Posterior cingulate gyrus (tissue), 11 donors: ENCODE measurements at regions of chr3 and their contacts with region 1.

Region 1: DNA sequence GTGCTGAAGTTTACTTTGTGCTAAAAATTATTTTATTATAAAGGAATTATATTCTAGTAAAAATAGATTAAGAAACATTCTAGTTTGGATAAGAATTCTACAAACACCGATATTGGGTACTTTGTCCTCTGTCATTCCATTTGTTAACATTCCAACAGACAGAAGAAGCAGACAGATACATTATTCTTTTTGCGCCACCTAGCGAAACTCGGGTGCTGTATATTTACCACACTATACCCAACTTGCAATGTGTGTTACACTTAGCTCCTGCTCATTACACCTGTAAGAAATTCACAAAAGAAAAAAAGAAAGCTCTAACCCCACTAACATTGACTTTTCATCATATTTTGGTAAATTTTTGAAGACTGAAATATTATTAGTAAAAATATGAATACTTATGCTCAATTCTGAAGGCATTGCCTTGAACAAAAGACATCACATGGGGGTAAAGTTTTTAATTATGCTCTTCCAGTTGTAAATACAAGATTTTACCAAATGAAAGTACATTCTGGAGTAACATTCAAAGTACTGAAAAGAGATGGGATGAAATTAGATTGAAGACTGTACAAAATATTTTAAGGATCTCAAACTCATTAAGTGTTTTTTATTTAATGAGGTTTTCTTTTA is 136.5 kb upstream of the MLF1 start:
- DNase-seq: peak in 6 of 10 donors; percentile 19 to 82 (median 46)

Region 2: DNA sequence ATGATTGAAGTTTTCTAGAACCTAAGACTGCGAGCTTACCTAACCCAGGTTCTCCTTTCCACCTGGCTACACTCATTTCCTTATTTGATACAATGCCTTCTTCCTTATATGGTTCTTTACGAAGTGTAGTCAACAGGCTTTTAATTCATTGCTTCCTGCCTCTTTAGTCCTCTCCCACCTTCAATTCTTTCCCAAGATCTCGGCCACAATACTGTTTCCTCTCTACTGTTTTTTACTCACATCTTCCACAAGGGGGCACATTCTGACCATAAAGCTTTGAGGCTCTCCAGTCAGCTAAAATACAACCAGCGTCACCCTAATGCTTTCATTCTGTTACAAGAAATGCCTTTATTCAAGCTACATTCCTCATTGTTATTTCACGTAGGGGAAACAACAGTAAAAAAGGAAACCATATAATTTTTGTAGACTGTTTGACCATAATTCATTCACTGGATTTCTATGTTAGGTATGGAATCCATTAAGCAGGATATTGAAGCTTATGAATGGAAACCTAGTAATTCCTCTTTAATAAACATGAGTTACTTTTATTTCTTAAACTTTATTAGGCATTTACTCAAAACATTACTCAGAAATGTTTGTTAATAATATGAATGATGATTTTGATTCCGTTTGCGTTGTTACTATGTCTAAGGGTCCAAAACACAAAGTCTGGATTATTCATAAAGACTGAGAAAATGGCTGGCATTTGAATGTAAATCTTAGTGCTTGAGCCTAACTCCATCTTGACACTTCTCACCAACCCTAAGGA is 901.8 kb before region 1 on chr3:
- intact Hi-C with region 1: loop called (anchors 10 kb)
- DNase-seq: peak in 1 of 10 donors; percentile 11

Region 3: GRCh38 chr3:157618075-157618760 is 816.3 kb before region 1 on chr3:
- intact Hi-C with region 1: loop called (anchors 1 kb)
- DNase-seq: no peak

Region 4: DNA sequence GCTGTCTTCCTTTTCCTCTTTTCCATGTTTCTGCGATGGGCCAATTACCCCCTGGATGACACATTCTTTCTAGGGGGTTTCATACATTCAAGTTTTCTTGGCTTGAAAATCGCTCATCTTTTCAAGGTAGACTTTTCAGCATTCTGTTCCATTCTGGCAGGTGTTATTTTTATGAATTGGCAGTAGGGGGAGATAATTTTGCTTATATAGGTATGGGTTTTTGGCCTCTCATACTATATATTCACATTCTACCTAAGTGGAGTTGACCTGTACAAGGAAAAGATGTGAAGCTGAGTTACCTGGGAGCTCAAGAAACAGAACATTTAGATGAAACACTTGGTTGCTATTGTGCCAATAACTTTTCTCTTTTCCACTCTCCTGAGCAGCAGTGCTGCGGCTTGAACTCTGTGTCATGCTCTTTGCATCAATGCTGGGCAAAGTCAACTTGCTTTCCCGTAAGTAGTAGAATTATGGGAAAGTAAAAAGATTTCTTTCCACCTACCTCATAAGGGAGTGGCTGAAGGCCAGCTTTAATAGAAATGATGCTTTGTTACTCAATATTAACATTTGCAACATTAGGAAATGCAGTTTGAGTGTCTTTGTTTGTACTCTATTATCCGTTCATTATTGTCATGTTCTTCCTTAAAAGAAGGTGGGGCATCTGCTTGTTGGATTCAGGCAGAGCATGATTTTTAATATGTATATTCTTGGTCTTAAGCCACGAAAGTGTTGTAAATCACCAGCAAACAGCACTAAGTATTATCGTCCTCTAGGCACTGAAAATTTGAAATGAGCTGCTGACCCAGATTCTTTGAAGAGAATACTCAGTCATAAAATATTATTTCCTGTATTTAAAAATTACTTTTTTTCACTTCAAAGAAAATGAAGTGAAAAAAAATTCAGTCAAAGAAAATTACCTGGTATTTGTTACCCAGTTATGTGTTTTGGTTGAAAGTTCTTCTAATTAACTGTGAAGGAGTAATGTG is 339.6 kb after region 1 on chr3:
- intact Hi-C with region 1: no loop called
- DNase-seq: no peak